IMR-90 (cell line): ENCODE measurements at regions of chr11 and their contacts with region 1.

Region 1: DNA sequence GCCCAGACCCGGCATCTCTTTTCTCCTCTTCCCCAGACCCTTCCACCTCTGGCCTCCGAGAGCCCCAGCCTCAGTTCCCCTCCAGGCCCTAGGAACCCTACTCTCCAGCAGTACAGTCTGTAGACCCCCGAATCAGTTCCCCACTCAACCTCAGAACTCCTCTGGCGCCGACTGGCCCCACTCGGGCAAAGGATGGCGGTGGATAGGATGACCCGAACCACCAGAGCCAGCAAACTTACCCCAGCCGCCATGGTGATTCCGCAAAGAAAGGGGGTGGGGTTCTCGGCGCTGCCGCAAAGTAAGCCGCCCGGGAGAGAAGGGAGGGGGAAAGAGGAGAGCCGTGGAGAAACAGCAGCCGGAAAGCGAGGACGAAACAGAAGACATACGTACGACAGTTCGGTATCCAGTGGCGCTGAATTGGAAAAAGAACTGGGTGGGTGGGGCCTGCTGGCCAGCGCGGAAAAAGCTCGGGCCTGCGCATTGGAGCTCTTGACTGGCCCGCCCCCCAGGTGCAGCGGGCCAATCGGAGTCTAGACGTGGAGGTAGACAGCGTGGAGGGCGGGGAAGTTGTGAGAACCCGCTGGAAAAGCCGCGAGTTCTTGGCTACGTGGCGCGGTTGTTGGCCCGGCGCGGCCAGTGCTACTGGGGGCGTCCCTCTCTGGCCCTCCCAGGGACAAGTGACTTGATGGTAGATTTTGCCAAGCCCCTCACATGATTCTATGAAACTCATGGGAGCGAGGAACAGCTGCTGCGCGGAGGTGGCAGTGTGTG is at the start of gene EEF1G:
- DNase-seq: peak; percentile 100
- ATAC-seq: peak; percentile 95
- H3K4me3 ChIP-seq: peak within 1 kb of the TSS; percentile 74
- H3K27ac ChIP-seq: peak within 1 kb of the TSS; percentile 91
- H3K4me1 ChIP-seq: peaks cover 12% of the 10 kb centered on the region
- H3K27me3 ChIP-seq: no peaks in the 10 kb centered on the region
- CTCF ChIP-seq: no peak
- POLR2A ChIP-seq: peak; percentile 94
- RAD21 ChIP-seq: no peak
- total RNA-seq, gene EEF1G: 1,598 and 1,857 TPM in 2 replicates

Region 2: DNA sequence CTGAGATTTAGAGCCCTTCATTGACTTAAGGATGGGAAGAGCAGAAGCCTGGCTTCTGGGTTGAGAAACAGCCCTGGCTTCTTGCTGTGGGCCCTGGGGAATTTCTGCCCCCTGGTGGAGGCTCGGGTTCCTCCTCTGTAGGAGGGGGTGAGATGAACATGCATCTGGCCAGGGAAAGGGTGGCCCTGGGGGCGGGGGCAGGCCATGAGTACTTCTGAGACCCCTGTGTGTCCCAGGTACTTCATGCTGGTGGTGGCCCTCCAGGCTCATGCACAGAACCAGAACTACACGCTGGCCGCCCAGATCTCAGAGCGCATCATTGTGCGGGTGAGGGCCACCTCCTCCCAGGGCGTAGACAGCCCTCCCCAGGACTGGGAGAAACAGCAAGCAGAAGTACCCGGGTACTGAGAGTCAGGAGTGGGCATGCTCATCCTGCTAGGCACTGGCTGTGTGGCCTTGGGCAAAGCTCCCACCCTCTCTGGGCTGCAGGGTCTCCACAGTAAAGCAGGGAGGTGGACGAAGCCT is 797.2 kb before region 1 on chr11:
- CTCF ChIA-PET with region 1: no interaction called
- POLR2A ChIA-PET with region 1: interaction called, 11 read pairs
- dilution Hi-C with region 1: no loop called
- in situ Hi-C with region 1: no loop called
- intact Hi-C with region 1: no loop called
- DNase-seq: peak; percentile 68
- ATAC-seq: peak; percentile 91
- H3K4me3 ChIP-seq: no peak overlapping the region
- H3K27ac ChIP-seq: no peak overlapping the region
- H3K4me1 ChIP-seq: no peaks in the 10 kb centered on the region
- H3K27me3 ChIP-seq: no peaks in the 10 kb centered on the region
- CTCF ChIP-seq: peak; percentile 84
- POLR2A ChIP-seq: no peak
- RAD21 ChIP-seq: peak; percentile 79

Region 3: DNA sequence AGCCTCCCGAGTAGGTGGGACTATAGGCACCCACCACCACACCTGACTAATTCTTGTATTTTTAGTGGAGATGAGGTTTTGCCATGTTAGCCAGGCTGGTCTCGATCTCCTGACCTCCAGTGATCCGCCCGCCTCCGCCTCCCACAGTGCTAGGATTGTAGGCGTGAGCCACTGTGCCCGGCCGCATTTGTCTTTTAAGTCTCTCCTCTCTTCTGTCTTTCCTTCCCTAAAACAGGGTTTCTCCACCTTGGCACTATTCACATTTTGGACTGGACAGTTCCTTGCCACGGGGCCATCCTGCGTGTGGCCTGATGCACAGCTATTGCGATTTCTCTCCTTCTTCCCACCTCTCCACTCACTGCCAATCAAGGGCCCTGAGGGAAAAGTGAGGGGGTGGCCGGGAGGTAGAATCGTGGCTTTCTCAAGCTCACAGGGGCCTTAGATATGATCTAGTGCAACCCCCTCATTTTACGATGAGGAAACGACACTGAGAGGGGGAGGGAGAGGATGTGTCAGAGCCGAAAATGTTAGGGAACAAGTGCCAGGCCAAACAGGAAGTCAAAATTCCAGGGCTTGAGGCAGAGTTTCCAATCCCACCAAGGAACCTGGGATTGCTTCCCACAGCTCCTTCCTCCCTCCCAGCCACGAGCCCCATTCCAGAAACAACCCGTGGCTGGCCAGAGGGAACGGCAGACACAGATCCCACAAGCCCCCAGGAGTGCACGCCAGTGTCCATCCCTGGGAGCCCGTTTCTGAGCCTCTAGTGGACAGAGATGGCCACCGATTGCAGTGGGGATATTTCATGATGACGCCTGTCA is 133.8 kb before region 1 on chr11:
- CTCF ChIA-PET with region 1: no interaction called
- POLR2A ChIA-PET with region 1: interaction called, 10 read pairs
- dilution Hi-C with region 1: no loop called
- in situ Hi-C with region 1: no loop called
- intact Hi-C with region 1: no loop called
- DNase-seq: peak; percentile 77
- ATAC-seq: peak; percentile 28
- H3K4me3 ChIP-seq: no peak overlapping the region
- H3K27ac ChIP-seq: peak overlapping the region; percentile 55
- H3K4me1 ChIP-seq: peaks cover 21% of the 10 kb centered on the region
- H3K27me3 ChIP-seq: no peaks in the 10 kb centered on the region
- CTCF ChIP-seq: 0 out of 2 replicates have a peak, but pooled peaks have one; percentile 13
- POLR2A ChIP-seq: no peak; the same call in 1 of the 2 replicates
- RAD21 ChIP-seq: 0 out of 2 replicates have a peak, but pooled peaks have one; percentile 5

Region 4: GRCh38 chr11:62508268-62509058 is 65.3 kb before region 1 on chr11:
- CTCF ChIA-PET with region 1: no interaction called
- POLR2A ChIA-PET with region 1: no interaction called
- dilution Hi-C with region 1: no loop called
- in situ Hi-C with region 1: no loop called
- intact Hi-C with region 1: no loop called
- DNase-seq: peak; percentile 36
- ATAC-seq: peak; percentile 80
- H3K4me3 ChIP-seq: no peak overlapping the region
- H3K27ac ChIP-seq: peak overlapping the region; percentile 15; the same call in 1 of the 2 replicates
- H3K4me1 ChIP-seq: peaks cover 4% of the 10 kb centered on the region
- H3K27me3 ChIP-seq: no peaks in the 10 kb centered on the region
- CTCF ChIP-seq: peak; percentile 44
- POLR2A ChIP-seq: no peak
- RAD21 ChIP-seq: peak; percentile 43

Region 5: GRCh38 chr11:62591448-62592145 is 17.8 kb after region 1 on chr11 and contains the start of gene TUT1:
- CTCF ChIA-PET with region 1: interaction called, 3 read pairs
- POLR2A ChIA-PET with region 1: interaction called, 15 read pairs
- dilution Hi-C with region 1: no loop called
- in situ Hi-C with region 1: no loop called
- intact Hi-C with region 1: no loop called
- DNase-seq: peak; percentile 99
- ATAC-seq: peak; percentile 97
- H3K4me3 ChIP-seq: peak within 1 kb of the TSS; percentile 66
- H3K27ac ChIP-seq: peak within 1 kb of the TSS; percentile 73
- H3K4me1 ChIP-seq: peaks cover 6% of the 10 kb centered on the region
- H3K27me3 ChIP-seq: no peaks in the 10 kb centered on the region
- CTCF ChIP-seq: no peak
- POLR2A ChIP-seq: peak; percentile 94
- RAD21 ChIP-seq: 0 out of 2 replicates have a peak, but pooled peaks have one; percentile 4
- total RNA-seq, gene TUT1: 3.3 and 4.3 TPM in 2 replicates